GM12878 (cell line): ENCODE measurements at regions of chr6 and their contacts with region 1.

Region 1: GRCh38 chr6:104525677-104526312 is 333.9 kb downstream of the HACE1 start:
- DNase-seq: peak; percentile 17
- ATAC-seq: peak; percentile 99
- H3K4me3 ChIP-seq: no peak overlapping the region; the same call in 1 of the 2 replicates
- H3K27ac ChIP-seq: no peak overlapping the region
- H3K4me1 ChIP-seq: no peaks in the 10 kb centered on the region
- H3K27me3 ChIP-seq: no peaks in the 10 kb centered on the region
- CTCF ChIP-seq: peak; percentile 82 to 88 (median 88)
- EP300 ChIP-seq: no peak
- POLR2A ChIP-seq: no peak
- RAD21 ChIP-seq: peak; percentile 98

Region 2: DNA sequence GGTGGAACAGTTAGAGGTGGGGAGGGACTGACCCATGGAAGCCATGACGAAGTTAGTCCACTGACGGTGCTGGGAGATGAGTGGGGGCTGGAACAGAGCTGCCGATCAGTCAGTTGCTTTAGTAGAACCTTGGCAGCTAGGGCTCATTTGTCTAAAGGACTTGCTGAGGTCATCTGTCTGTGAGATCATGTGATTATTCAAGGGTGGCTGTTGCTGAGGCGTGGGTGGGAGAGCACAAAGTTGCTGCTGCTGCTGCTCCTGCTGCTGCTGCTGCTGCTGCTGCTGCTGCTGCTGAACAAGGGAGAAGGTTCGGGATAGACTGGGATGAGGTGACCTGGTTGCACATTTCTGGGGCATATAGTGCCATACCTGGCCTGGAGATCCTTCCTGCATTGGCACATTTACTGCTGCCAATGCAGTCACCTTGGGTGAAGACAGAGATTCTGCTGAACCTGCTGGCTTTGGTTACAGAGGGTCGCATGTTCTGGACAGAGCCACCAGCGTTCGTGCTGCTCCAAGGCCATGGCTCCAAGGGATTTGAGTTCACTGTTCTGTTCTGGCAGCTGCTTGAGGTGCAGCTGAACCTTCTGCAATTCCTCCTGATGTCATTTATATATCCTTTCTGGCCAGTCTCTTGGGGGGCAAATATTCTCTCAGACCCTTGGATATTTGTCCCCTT is 506.6 kb before region 1 on chr6:
- CTCF ChIA-PET with region 1: interaction called, 3 read pairs
- POLR2A ChIA-PET with region 1: no interaction called
- RAD21 ChIA-PET with region 1: no interaction called
- SMC1A ChIA-PET with region 1: no interaction called
- in situ Hi-C with region 1: no loop called
- intact Hi-C with region 1: loop called (anchors 10 kb)
- DNase-seq: no peak
- ATAC-seq: peak; percentile 50
- H3K4me3 ChIP-seq: no peak overlapping the region
- H3K27ac ChIP-seq: no peak overlapping the region
- H3K4me1 ChIP-seq: no peaks in the 10 kb centered on the region
- H3K27me3 ChIP-seq: no peaks in the 10 kb centered on the region
- CTCF ChIP-seq: no peak
- EP300 ChIP-seq: no peak
- POLR2A ChIP-seq: no peak
- RAD21 ChIP-seq: no peak

Region 3: DNA sequence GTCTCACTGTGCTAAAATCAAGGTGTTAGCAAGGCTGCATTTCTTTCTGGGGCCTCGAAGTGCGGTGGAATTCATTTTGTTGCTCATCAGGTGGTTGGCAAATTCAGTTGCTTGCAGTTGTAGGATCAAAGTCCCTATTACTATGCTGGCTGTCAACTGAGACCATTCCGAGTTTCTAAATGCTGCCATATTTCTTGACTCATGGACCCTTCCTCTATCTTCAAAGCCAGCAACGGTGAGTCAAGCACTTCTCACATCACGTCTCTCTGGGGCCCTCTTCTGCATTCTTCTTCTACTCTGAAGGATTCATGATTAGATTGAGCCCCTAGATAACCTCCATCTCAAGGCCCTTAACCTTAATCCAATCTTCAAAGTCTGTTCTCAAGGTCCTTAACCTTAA is 285.8 kb before region 1 on chr6:
- CTCF ChIA-PET with region 1: no interaction called
- POLR2A ChIA-PET with region 1: no interaction called
- RAD21 ChIA-PET with region 1: no interaction called
- SMC1A ChIA-PET with region 1: no interaction called
- in situ Hi-C with region 1: no loop called
- intact Hi-C with region 1: loop called (anchors 10 kb)
- DNase-seq: no peak
- ATAC-seq: no peak
- H3K4me3 ChIP-seq: no peak overlapping the region
- H3K27ac ChIP-seq: no peak overlapping the region
- H3K4me1 ChIP-seq: no peaks in the 10 kb centered on the region
- H3K27me3 ChIP-seq: no peaks in the 10 kb centered on the region; a peak in 1 of 4 replicates
- CTCF ChIP-seq: no peak
- EP300 ChIP-seq: no peak
- POLR2A ChIP-seq: no peak
- RAD21 ChIP-seq: no peak

Region 4: GRCh38 chr6:104325341-104326172 is 200.2 kb before region 1 on chr6:
- CTCF ChIA-PET with region 1: interaction called, 9 read pairs
- POLR2A ChIA-PET with region 1: no interaction called
- RAD21 ChIA-PET with region 1: no interaction called
- SMC1A ChIA-PET with region 1: interaction called, 6 read pairs
- in situ Hi-C with region 1: no loop called
- intact Hi-C with region 1: loop called (anchors 2 kb)
- DNase-seq: no peak
- ATAC-seq: peak; percentile 52
- H3K4me3 ChIP-seq: no peak overlapping the region
- H3K27ac ChIP-seq: no peak overlapping the region
- H3K4me1 ChIP-seq: no peaks in the 10 kb centered on the region
- H3K27me3 ChIP-seq: no peaks in the 10 kb centered on the region; a peak in 1 of 4 replicates
- CTCF ChIP-seq: peak; percentile 41 to 55 (median 48)
- EP300 ChIP-seq: no peak
- POLR2A ChIP-seq: no peak
- RAD21 ChIP-seq: peak; percentile 47

Region 5: GRCh38 chr6:104558746-104559145 is 33.0 kb after region 1 on chr6:
- CTCF ChIA-PET with region 1: no interaction called
- POLR2A ChIA-PET with region 1: no interaction called
- RAD21 ChIA-PET with region 1: no interaction called
- SMC1A ChIA-PET with region 1: no interaction called
- in situ Hi-C with region 1: no loop called
- intact Hi-C with region 1: no loop called
- DNase-seq: no peak
- ATAC-seq: no peak
- H3K4me3 ChIP-seq: no peak overlapping the region
- H3K27ac ChIP-seq: no peak overlapping the region
- H3K4me1 ChIP-seq: no peaks in the 10 kb centered on the region
- H3K27me3 ChIP-seq: no peaks in the 10 kb centered on the region
- CTCF ChIP-seq: no peak
- EP300 ChIP-seq: no peak
- POLR2A ChIP-seq: no peak
- RAD21 ChIP-seq: no peak

Region 6: GRCh38 chr6:104771258-104771832 is 245.6 kb after region 1 on chr6:
- CTCF ChIA-PET with region 1: interaction called, 4 read pairs
- POLR2A ChIA-PET with region 1: no interaction called
- RAD21 ChIA-PET with region 1: interaction called, 3 read pairs
- SMC1A ChIA-PET with region 1: interaction called, 3 read pairs
- in situ Hi-C with region 1: loop called (anchors 5 kb)
- intact Hi-C with region 1: loop called (anchors 2 kb)
- DNase-seq: no peak
- ATAC-seq: peak; percentile 84
- H3K4me3 ChIP-seq: no peak overlapping the region
- H3K27ac ChIP-seq: no peak overlapping the region
- H3K4me1 ChIP-seq: no peaks in the 10 kb centered on the region
- H3K27me3 ChIP-seq: no peaks in the 10 kb centered on the region
- CTCF ChIP-seq: peak in 2 of 3 experiments; percentile 46 to 50; a peak in 2 of 6 replicates
- EP300 ChIP-seq: no peak
- POLR2A ChIP-seq: no peak
- RAD21 ChIP-seq: peak; percentile 60